Activated CD4-positive, alpha-beta memory T cell treated with anti-CD3 and anti-CD28 coated beads for 36 hours (primary cell): ENCODE measurements at regions of chr5 and their contacts with region 1.

Region 1: DNA sequence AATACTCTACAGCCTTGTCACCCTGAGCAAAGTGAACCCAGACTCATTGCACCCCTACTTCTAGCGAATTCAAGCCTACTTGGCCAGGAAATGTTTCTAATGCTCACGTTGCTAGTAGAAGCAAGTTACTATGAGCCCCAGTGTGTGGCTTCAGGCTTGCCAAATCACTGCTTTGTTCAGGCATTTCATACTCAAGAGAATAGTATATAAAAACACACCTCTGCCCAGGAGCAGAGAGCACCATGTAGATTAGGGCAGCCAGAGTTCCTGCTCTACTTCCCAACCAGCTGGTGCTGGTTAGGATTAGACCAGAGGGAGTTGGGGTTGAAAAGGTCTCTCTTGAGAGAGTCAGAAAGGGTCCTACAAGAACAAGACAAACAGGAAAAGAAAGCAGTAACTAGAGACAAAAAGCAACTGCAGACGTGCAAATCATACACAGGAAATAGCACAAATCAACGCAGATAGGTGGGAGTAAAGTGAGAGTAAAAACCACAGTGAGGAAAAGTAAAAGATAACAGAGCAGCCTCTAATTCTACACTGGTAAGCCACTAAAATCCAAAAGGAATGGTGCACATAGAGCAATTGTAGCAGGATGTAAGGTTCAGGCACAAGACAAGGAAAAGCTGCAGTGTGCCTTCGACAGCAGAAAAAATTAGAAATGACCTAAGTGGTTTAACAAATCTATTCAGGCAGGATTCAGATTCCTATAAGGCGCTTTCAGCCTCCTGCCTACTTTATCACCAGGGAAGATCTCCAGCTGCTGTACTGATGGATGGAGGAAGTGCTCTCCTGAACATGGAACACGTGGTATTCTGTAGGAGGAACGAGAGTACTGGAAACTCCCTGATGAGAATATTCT is 49.6 kb upstream of the KIF2A start:
- DNase-seq: peak; percentile 26
- H3K4me3 Mint-ChIP-seq: peak overlapping the region; percentile 17
- H3K27ac Mint-ChIP-seq: peak overlapping the region; percentile 74
- H3K4me1 Mint-ChIP-seq: peaks cover 54% of the 10 kb centered on the region
- H3K27me3 Mint-ChIP-seq: no peaks in the 10 kb centered on the region

Region 2: DNA sequence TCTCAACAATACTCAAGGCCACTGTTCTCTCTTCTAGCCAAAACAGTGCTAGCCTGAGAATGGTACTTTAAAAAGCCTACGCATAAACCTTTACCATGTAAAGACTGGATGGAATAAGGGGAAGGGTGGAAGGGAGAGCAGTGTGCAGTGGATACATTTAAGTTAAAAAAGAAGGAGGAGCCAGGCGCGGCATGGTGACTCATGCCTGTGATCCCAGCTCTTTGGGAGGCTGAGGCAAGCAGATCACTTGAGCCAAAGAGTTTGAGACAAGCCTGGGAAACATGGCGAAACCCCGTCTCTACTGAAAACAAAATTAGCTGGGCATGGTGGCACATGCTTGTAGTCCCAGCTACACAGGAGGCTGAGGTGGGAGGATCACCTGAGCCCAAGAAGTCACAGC is 78.1 kb before region 1 on chr5:
- CTCF ChIA-PET with region 1: no interaction called
- POLR2A ChIA-PET with region 1: no interaction called
- intact Hi-C with region 1: no loop called
- DNase-seq: no peak
- H3K4me3 Mint-ChIP-seq: no peak overlapping the region
- H3K27ac Mint-ChIP-seq: no peak overlapping the region
- H3K4me1 Mint-ChIP-seq: no peaks in the 10 kb centered on the region
- H3K27me3 Mint-ChIP-seq: peaks cover 8% of the 10 kb centered on the region

Region 3: GRCh38 chr5:62268234-62268633 is 11.8 kb after region 1 on chr5:
- CTCF ChIA-PET with region 1: no interaction called
- POLR2A ChIA-PET with region 1: interaction called, 3 read pairs
- intact Hi-C with region 1: loop called (anchors 1 kb)
- DNase-seq: no peak
- H3K4me3 Mint-ChIP-seq: no peak overlapping the region
- H3K27ac Mint-ChIP-seq: peak overlapping the region; percentile 15
- H3K4me1 Mint-ChIP-seq: peaks cover 17% of the 10 kb centered on the region
- H3K27me3 Mint-ChIP-seq: no peaks in the 10 kb centered on the region